PC-9 (cell line): ENCODE measurements at regions of chr4 and their contacts with region 1.

Region 1: GRCh38 chr4:30719460-30720020 is 629 bp upstream of the PCDH7 start:
- DNase-seq: peak; percentile 53 to 55
- H3K4me3 ChIP-seq: peak overlapping the region; percentile 64
- H3K27ac ChIP-seq: peak overlapping the region; percentile 60
- H3K4me1 ChIP-seq: peaks cover 16% of the 10 kb centered on the region
- H3K27me3 ChIP-seq: no peaks in the 10 kb centered on the region
- CTCF ChIP-seq: no peak

Region 2: GRCh38 chr4:29571322-29571721 is 1148.2 kb before region 1 on chr4:
- CTCF ChIA-PET with region 1: no interaction called
- POLR2A ChIA-PET with region 1: no interaction called
- intact Hi-C with region 1: no loop called
- DNase-seq: no peak
- H3K4me3 ChIP-seq: no peak overlapping the region
- H3K27ac ChIP-seq: no peak overlapping the region
- H3K4me1 ChIP-seq: no peaks in the 10 kb centered on the region
- H3K27me3 ChIP-seq: no peaks in the 10 kb centered on the region
- CTCF ChIP-seq: no peak

Region 3: GRCh38 chr4:30669824-30670605 is 49.5 kb before region 1 on chr4:
- CTCF ChIA-PET with region 1: no interaction called
- POLR2A ChIA-PET with region 1: no interaction called
- intact Hi-C with region 1: no loop called
- DNase-seq: no peak
- H3K4me3 ChIP-seq: no peak overlapping the region
- H3K27ac ChIP-seq: no peak overlapping the region
- H3K4me1 ChIP-seq: no peaks in the 10 kb centered on the region
- H3K27me3 ChIP-seq: no peaks in the 10 kb centered on the region
- CTCF ChIP-seq: no peak

Region 4: DNA sequence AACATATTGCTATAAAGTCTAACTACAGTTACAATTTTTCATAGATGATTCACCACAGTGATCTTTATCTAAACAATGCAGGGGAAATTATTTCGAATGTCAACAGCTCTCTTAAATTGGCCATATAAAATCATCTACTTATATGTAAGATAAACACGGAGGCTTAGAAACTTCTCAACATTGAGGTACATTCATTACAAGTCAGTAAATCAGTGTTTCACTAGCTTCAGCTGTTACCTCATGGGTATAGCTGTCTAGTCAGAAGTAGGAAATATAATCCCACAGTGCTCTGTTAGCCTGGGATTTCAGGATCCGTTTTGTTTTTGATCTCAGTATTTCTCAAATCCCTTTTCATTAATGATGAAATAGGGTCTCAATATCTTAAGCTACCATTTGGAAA is 43.8 kb after region 1 on chr4:
- CTCF ChIA-PET with region 1: interaction called, 15 read pairs
- POLR2A ChIA-PET with region 1: no interaction called
- intact Hi-C with region 1: no loop called
- DNase-seq: peak in 1 of 2 experiments; percentile 76
- H3K4me3 ChIP-seq: no peak overlapping the region
- H3K27ac ChIP-seq: peak overlapping the region; percentile 44
- H3K4me1 ChIP-seq: peaks cover 18% of the 10 kb centered on the region
- H3K27me3 ChIP-seq: no peaks in the 10 kb centered on the region
- CTCF ChIP-seq: no peak

Region 5: GRCh38 chr4:30790123-30790522 is 70.6 kb after region 1 on chr4:
- CTCF ChIA-PET with region 1: no interaction called
- POLR2A ChIA-PET with region 1: interaction called, 10 read pairs
- intact Hi-C with region 1: no loop called
- DNase-seq: no peak
- H3K4me3 ChIP-seq: no peak overlapping the region
- H3K27ac ChIP-seq: peak overlapping the region; percentile 61
- H3K4me1 ChIP-seq: peaks cover 22% of the 10 kb centered on the region
- H3K27me3 ChIP-seq: no peaks in the 10 kb centered on the region
- CTCF ChIP-seq: no peak

Region 6: GRCh38 chr4:30863021-30863420 is 143.5 kb after region 1 on chr4:
- CTCF ChIA-PET with region 1: no interaction called
- POLR2A ChIA-PET with region 1: interaction called, 11 read pairs
- intact Hi-C with region 1: loop called (anchors 2 kb)
- DNase-seq: no peak
- H3K4me3 ChIP-seq: no peak overlapping the region
- H3K27ac ChIP-seq: no peak overlapping the region
- H3K4me1 ChIP-seq: peaks cover 25% of the 10 kb centered on the region
- H3K27me3 ChIP-seq: no peaks in the 10 kb centered on the region
- CTCF ChIP-seq: no peak